CD8-positive, alpha-beta T cell (primary cell): ENCODE measurements at regions of chr5 and their contacts with region 1.

Region 1: GRCh38 chr5:159286420-159287035 is 23.4 kb downstream of the UBLCP1 start:
- DNase-seq: peak in 3 of 9 experiments; percentile 13 to 58 (median 44)
- ATAC-seq: no peak
- H3K4me3 ChIP-seq: no peak overlapping the region
- H3K4me3 Mint-ChIP-seq: no peak overlapping the region
- H3K27ac ChIP-seq: no peak overlapping the region
- H3K27ac Mint-ChIP-seq: no peak overlapping the region
- H3K4me1 ChIP-seq: no peaks in the 10 kb centered on the region
- H3K4me1 Mint-ChIP-seq: no peaks in the 10 kb centered on the region
- H3K27me3 ChIP-seq: no peaks in the 10 kb centered on the region
- H3K27me3 Mint-ChIP-seq: no peaks in the 10 kb centered on the region
- CTCF ChIP-seq: peak; percentile 53

Region 2: DNA sequence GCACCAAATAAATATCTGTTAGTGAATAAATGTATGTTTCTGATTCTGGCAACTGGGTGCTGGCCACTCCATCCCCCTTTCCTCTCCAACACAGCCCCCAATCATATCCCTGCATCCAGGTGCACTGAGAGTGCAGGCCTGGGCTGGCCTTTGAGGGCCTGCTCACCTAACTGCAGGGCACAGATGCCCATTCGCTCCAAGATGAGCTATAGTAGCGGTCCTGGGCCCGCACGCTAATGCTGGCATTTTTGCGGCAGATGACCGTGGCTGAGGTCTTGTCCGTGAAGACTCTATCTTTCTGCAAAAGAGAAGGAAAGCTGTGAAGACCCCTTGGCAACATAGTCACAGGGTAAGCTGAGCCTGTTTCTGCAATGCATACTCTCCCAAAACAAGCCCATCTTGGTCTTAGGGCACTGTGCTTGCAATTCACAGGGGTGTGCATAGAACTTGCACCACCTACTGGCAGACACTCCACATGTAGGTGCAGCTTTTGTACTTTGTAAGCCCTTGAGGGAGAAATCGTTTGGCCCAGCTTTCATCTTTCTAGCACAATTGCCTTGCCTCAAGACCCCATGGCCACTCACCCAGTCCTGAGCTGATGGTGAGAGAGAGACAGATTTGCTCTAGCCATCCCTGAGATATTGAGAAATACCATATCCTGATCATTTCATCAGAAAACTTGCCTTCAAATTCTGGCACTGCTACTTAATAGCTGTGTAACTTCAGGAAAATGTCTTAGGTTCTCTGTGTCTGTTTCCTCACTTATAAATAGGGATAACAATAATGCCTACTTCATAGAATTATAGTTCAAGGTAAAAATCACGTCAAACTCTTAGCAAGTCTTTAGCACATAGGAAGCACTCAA is 30.2 kb after region 1 on chr5:
- CTCF ChIA-PET with region 1: interaction called, 5 read pairs
- POLR2A ChIA-PET with region 1: no interaction called
- intact Hi-C with region 1: loop called in 1 of 2 experiments (anchors 1 kb)
- DNase-seq: peak in 7 of 9 experiments; percentile 27 to 70 (median 44)
- ATAC-seq: peak; percentile 73
- H3K4me3 ChIP-seq: no peak overlapping the region
- H3K4me3 Mint-ChIP-seq: no peak overlapping the region
- H3K27ac ChIP-seq: no peak overlapping the region
- H3K27ac Mint-ChIP-seq: no peak overlapping the region
- H3K4me1 ChIP-seq: no peaks in the 10 kb centered on the region
- H3K4me1 Mint-ChIP-seq: no peaks in the 10 kb centered on the region
- H3K27me3 ChIP-seq: no peaks in the 10 kb centered on the region
- H3K27me3 Mint-ChIP-seq: peaks cover 7% of the 10 kb centered on the region
- CTCF ChIP-seq: peak; percentile 55

Region 3: DNA sequence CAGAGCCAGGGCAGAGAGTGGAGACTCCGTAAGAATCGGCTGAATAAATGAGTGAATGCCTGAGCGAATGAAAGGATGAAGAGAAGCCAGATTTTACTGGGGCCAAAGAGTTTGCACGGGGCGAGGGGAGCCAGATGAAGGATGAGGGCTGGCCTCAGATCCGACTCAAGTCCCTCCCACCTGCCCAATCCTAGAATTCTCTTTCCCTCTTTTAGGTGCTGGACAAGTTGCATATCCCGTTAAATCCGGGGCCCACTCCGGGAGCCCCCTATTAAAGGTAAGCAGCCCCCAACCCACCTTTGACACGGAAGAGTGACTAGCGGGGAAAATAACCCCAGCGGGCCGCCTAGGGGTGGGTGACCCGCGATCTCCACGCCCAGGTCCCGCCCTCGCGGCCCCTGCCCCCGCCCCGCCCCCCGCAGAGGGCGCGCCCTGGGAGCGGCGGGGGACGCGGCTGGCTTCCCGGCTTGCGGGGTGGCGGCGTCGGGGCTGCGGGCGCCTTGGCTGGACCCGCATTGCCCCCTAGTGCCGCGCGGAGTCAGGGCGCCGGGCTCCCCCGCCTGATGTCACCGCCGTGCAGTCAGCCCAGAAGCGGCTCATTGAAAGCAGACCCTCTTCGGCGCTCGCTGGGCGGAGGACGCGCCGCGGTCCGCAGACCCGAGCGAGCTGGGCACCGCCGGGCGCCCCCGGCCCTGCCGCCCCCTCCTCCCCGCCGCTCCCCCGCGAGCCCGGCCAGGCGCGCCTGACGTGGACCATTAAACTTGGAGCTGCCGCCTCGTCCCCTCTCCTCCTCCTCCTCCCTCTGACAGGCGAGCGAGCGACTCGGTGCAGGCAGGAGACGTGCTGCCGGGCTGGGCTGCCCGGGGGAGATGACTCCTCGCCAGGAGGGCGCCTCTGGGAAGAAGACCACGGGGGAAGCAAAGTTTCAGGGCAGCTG is 629.6 kb after region 1 on chr5 and contains the start of gene ADRA1B:
- CTCF ChIA-PET with region 1: no interaction called
- POLR2A ChIA-PET with region 1: no interaction called
- intact Hi-C with region 1: loop called (anchors 1 to 10 kb)
- DNase-seq: peak in 8 of 9 experiments; percentile 14 to 59 (median 35)
- ATAC-seq: peak; percentile 69
- H3K4me3 ChIP-seq: no peak within 1 kb of the TSS
- H3K4me3 Mint-ChIP-seq: peak within 1 kb of the TSS; percentile 51
- H3K27ac ChIP-seq: no peak within 1 kb of the TSS
- H3K27ac Mint-ChIP-seq: no peak within 1 kb of the TSS
- H3K4me1 ChIP-seq: peaks cover 5% of the 10 kb centered on the region
- H3K4me1 Mint-ChIP-seq: peaks cover 14% of the 10 kb centered on the region
- H3K27me3 ChIP-seq: peaks cover 7 to 20% of the 10 kb centered on the region in 2 experiments
- H3K27me3 Mint-ChIP-seq: peaks cover 59% of the 10 kb centered on the region
- CTCF ChIP-seq: no peak
- total RNA-seq, gene ADRA1B: not detected

Region 4: GRCh38 chr5:159987031-159987674 is 700.6 kb after region 1 on chr5:
- CTCF ChIA-PET with region 1: interaction called, 36 read pairs
- POLR2A ChIA-PET with region 1: interaction called, 3 read pairs
- intact Hi-C with region 1: loop called in 1 of 2 experiments (anchors 2 kb)
- DNase-seq: peak; percentile 47 to 85 (median 75)
- ATAC-seq: peak; percentile 93
- H3K4me3 ChIP-seq: peak overlapping the region; percentile 34 to 58
- H3K4me3 Mint-ChIP-seq: peak overlapping the region; percentile 75
- H3K27ac ChIP-seq: no peak overlapping the region
- H3K27ac Mint-ChIP-seq: no peak overlapping the region
- H3K4me1 ChIP-seq: no peaks in the 10 kb centered on the region
- H3K4me1 Mint-ChIP-seq: no peaks in the 10 kb centered on the region
- H3K27me3 ChIP-seq: peaks cover 0 to 8% of the 10 kb centered on the region in 2 experiments
- H3K27me3 Mint-ChIP-seq: peaks cover 31% of the 10 kb centered on the region
- CTCF ChIP-seq: peak; percentile 56